ENCODE measurements at regions of chr11 and their contacts with region 1.

Region 1: DNA sequence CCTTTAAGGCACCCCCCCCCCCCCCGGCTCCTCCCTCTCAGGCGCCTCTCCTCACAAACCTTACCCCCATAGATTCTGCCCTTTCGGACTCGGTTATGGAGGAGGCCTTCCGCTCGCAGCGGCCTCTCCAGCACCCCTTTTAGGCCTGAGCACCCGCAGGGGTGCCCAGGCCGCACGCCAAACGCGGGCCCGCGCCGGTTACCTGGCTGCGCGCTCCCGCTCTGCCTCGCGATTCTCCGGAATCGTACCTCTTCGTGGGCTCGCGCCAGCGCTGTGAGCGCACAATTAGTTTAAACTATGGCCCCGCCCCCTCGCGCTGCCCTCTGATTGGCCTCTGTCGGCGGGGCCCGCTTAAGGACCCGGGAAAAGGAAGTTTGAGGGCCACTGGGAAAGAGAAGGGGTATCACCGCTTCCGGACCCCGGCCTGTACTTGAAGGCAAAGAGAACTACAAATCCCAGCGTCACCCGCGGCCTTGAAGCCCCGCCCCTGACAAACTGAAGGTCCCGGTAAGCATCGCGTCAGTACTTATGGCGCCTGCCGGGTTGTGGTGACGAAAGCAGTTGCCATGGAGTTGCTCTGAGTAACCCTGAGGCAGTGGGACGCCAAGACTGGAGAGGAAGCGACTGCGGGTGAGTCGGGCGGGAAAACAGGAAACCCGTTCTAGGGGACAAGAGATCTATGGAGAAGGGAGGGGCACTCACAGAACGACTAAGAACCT is at the starts of genes LRRC51 and NUMA1:
- DNase-seq: peak; percentile 96 to 100 (median 99)
- ATAC-seq: peak; percentile 86
- H3K4me3 ChIP-seq: peak within 1 kb of the TSS; percentile 61 to 73
- H3K4me3 Mint-ChIP-seq: peak within 1 kb of the TSS; percentile 97
- H3K27ac ChIP-seq: peak within 1 kb of the TSS; percentile 75 to 90
- H3K27ac Mint-ChIP-seq: peak within 1 kb of the TSS; percentile 97
- H3K4me1 ChIP-seq: peaks cover 14% of the 10 kb centered on the region
- H3K4me1 Mint-ChIP-seq: peaks cover 39% of the 10 kb centered on the region
- H3K27me3 ChIP-seq: no peaks in the 10 kb centered on the region
- H3K27me3 Mint-ChIP-seq: no peaks in the 10 kb centered on the region
- CTCF ChIP-seq: no peak
- total RNA-seq, gene LRRC51: 1.1 to 1.3 TPM
- total RNA-seq, gene NUMA1: 171 to 174 TPM

Region 2: GRCh38 chr11:71448257-71449171 is 631.9 kb before region 1 on chr11 and contains the start of gene DHCR7:
- CTCF ChIA-PET with region 1: no interaction called
- POLR2A ChIA-PET with region 1: no interaction called
- intact Hi-C with region 1: loop called in 1 of 2 experiments (anchors 5 kb)
- DNase-seq: peak; percentile 80 to 95 (median 93)
- ATAC-seq: peak; percentile 70
- H3K4me3 ChIP-seq: peak within 1 kb of the TSS; percentile 77 to 98
- H3K4me3 Mint-ChIP-seq: peak within 1 kb of the TSS; percentile 93
- H3K27ac ChIP-seq: peak within 1 kb of the TSS; percentile 80 to 82
- H3K27ac Mint-ChIP-seq: peak within 1 kb of the TSS; percentile 90
- H3K4me1 ChIP-seq: peaks cover 32% of the 10 kb centered on the region
- H3K4me1 Mint-ChIP-seq: peaks cover 47% of the 10 kb centered on the region
- H3K27me3 ChIP-seq: no peaks in the 10 kb centered on the region
- H3K27me3 Mint-ChIP-seq: no peaks in the 10 kb centered on the region
- CTCF ChIP-seq: no peak
- total RNA-seq, gene DHCR7: 33.9 to 40.0 TPM

Region 3: DNA sequence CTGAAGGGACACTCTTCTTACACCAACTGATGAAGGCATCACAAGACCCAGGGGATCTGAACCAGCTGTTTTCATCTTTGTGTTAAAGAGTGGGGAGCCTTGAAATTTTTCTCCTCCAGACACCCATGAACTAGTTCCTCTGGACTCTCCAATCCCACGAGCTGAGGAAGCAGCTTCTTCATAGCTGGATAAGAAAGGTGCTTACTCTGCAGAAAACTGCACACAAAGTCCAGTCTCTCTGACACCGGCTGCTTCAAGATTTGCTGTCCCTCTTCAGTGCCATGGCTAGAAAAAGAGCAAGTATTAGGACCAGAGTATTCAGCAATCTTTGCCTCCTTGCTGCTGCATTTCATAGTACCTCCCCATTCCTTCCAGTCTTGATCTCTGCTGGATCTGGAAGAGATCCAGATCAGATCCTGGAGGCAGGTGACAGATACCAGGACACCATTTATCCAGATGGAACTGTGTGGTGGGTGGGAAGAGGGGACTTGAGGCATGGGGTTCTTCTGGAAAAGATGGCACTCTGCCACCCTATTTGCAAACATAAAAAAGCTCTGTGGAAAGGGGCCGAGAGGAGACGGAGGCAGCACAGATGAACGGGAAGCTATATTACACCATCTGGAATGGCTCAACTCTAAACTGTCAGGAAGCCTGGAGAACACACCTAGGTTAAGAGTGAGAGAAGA is 56.2 kb before region 1 on chr11:
- CTCF ChIA-PET with region 1: interaction called, 82 read pairs
- POLR2A ChIA-PET with region 1: no interaction called
- intact Hi-C with region 1: loop called in 1 of 2 experiments (anchors 1 kb)
- DNase-seq: no peak
- ATAC-seq: no peak
- H3K4me3 ChIP-seq: no peak overlapping the region
- H3K4me3 Mint-ChIP-seq: no peak overlapping the region
- H3K27ac ChIP-seq: no peak overlapping the region
- H3K27ac Mint-ChIP-seq: no peak overlapping the region
- H3K4me1 ChIP-seq: peaks cover 22% of the 10 kb centered on the region
- H3K4me1 Mint-ChIP-seq: peaks cover 41% of the 10 kb centered on the region
- H3K27me3 ChIP-seq: no peaks in the 10 kb centered on the region
- H3K27me3 Mint-ChIP-seq: no peaks in the 10 kb centered on the region
- CTCF ChIP-seq: no peak

Region 4: DNA sequence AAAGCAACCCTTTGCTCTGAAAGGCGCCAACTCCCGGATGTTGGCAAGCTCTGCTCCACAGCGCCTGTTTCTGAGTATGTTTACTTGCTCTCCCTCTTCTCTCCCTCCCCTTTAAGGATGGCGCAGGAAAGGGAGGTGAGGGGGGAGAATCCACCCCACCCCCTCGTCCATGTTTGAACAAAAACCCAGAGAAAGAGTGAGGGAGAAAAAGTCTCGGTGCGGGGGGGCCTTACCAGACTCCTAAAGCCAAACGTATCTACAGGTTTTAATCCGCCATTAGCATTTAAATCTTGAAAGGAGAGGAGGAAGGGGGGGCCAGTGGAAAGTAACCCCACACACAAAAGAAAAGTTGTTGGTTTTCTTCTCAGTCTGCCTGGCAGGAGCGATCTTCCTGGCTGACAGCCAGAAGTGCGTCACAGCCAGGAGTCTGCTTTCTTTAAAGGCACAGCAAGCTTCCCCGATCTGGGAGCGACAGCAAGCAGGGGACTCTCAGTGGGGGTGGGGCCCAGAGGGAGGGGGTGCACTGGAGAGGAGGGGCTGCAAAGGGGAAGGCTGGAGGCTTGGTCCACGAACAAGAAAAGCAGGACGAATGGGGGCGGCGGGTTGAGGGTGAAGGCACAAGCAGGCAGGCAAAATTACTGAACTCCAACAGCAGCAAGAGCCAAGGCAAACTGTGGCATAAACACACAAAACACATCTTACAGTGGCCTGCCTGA is 39.5 kb before region 1 on chr11:
- CTCF ChIA-PET with region 1: interaction called, 11 read pairs
- POLR2A ChIA-PET with region 1: interaction called, 42 read pairs
- intact Hi-C with region 1: loop called (anchors 1 kb)
- DNase-seq: peak; percentile 52 to 92 (median 85)
- ATAC-seq: peak; percentile 77
- H3K4me3 ChIP-seq: peak overlapping the region; percentile 80 to 82
- H3K4me3 Mint-ChIP-seq: no peak overlapping the region
- H3K27ac ChIP-seq: peak overlapping the region; percentile 93 to 96
- H3K27ac Mint-ChIP-seq: no peak overlapping the region
- H3K4me1 ChIP-seq: peaks cover 72% of the 10 kb centered on the region
- H3K4me1 Mint-ChIP-seq: peaks cover 40% of the 10 kb centered on the region
- H3K27me3 ChIP-seq: no peaks in the 10 kb centered on the region
- H3K27me3 Mint-ChIP-seq: no peaks in the 10 kb centered on the region
- CTCF ChIP-seq: no peak

Region 5: GRCh38 chr11:72102946-72103753 is 22.7 kb after region 1 on chr11 and contains the start of gene LAMTOR1:
- CTCF ChIA-PET with region 1: interaction called, 8 read pairs
- POLR2A ChIA-PET with region 1: interaction called, 6 read pairs
- intact Hi-C with region 1: loop called (anchors 1 kb)
- DNase-seq: peak; percentile 93 to 99 (median 98)
- ATAC-seq: peak; percentile 96
- H3K4me3 ChIP-seq: peak within 1 kb of the TSS; percentile 67 to 93
- H3K4me3 Mint-ChIP-seq: peak within 1 kb of the TSS; percentile 74
- H3K27ac ChIP-seq: peak within 1 kb of the TSS; percentile 90 to 97
- H3K27ac Mint-ChIP-seq: peak within 1 kb of the TSS; percentile 88
- H3K4me1 ChIP-seq: peaks cover 22% of the 10 kb centered on the region
- H3K4me1 Mint-ChIP-seq: peaks cover 45% of the 10 kb centered on the region
- H3K27me3 ChIP-seq: no peaks in the 10 kb centered on the region
- H3K27me3 Mint-ChIP-seq: no peaks in the 10 kb centered on the region
- CTCF ChIP-seq: no peak
- total RNA-seq, gene LAMTOR1: 27.1 to 30.4 TPM

Region 6: DNA sequence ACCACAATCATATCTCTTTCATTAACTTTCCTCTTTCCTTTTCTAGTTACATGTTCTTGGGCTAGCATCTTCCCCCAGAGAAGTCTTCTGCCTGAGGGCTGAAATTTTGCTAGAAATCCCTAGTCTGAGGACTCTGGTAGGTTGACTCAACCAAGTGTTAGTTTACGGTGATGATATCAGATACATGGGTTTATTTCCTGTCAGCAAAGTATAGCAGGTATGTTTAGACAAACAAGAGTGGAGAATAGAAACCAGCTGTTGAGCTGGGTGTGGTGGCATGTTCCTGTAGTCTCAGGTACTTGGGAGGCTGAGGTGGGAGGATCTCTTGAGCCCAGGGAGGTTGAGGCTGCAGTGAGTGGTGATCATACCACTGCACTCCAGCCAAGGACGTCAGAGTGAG is 122.7 kb after region 1 on chr11:
- CTCF ChIA-PET with region 1: no interaction called
- POLR2A ChIA-PET with region 1: no interaction called
- intact Hi-C with region 1: no loop called
- DNase-seq: no peak
- ATAC-seq: no peak
- H3K4me3 ChIP-seq: no peak overlapping the region
- H3K4me3 Mint-ChIP-seq: no peak overlapping the region
- H3K27ac ChIP-seq: no peak overlapping the region
- H3K27ac Mint-ChIP-seq: no peak overlapping the region
- H3K4me1 ChIP-seq: no peaks in the 10 kb centered on the region
- H3K4me1 Mint-ChIP-seq: no peaks in the 10 kb centered on the region
- H3K27me3 ChIP-seq: no peaks in the 10 kb centered on the region
- H3K27me3 Mint-ChIP-seq: peaks cover 5% of the 10 kb centered on the region
- CTCF ChIP-seq: no peak

Region 7: DNA sequence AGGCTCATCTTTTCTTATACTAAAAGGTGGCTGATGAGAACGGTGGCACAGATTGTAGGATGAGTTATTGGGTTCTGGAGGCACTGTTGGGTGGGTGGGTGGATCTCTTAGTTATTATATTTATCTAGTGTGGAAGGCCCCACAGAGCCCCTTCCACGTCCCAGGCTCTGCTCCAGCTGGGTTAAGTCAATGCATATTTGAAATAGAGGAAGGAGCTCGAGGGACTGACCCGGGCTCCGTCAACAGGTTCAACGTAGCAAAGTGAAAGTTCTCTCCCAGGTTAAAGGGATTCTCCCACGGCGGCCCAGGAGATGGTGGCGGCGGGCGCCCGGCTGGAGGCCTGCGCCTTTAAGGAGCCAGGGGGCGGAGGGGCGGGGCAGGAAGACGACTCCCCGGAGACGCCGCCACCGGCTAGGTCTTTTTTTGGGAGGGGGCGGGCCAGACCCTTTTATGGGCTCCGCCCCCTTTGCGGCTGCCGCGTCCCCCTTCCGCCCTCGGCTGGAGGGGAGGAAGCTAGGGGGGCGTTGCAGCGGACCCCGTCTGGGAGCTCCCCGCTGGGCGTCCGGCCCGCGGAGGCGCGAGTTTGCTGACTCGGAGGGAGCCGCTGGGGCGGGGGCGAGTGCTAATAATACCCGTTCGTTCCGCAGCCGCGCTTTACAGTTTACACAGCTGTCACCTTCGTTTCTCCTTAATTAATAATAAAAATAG is 142.6 kb after region 1 on chr11:
- CTCF ChIA-PET with region 1: no interaction called
- POLR2A ChIA-PET with region 1: no interaction called
- intact Hi-C with region 1: loop called (anchors 1 kb)
- DNase-seq: peak; percentile 83 to 97 (median 94)
- ATAC-seq: peak; percentile 78
- H3K4me3 ChIP-seq: peak overlapping the region; percentile 48 to 84
- H3K4me3 Mint-ChIP-seq: peak overlapping the region; percentile 87
- H3K27ac ChIP-seq: peak overlapping the region; percentile 23 to 78
- H3K27ac Mint-ChIP-seq: peak overlapping the region; percentile 90
- H3K4me1 ChIP-seq: peaks cover 21% of the 10 kb centered on the region
- H3K4me1 Mint-ChIP-seq: peaks cover 22% of the 10 kb centered on the region
- H3K27me3 ChIP-seq: no peaks in the 10 kb centered on the region
- H3K27me3 Mint-ChIP-seq: peaks cover 4% of the 10 kb centered on the region
- CTCF ChIP-seq: no peak

Measured in CD8-positive, alpha-beta T cell (primary cell).